ENCODE measurements at regions of chr4 and their contacts with region 1.

Region 1: GRCh38 chr4:106835919-106836318 is 200.2 kb downstream of the DKK2 start:
- DNase-seq: no peak
- H3K4me3 ChIP-seq: no peak overlapping the region
- H3K27ac ChIP-seq: no peak overlapping the region
- H3K4me1 ChIP-seq: no peaks in the 10 kb centered on the region
- H3K27me3 ChIP-seq: no peaks in the 10 kb centered on the region
- CTCF ChIP-seq: no peak
- POLR2A ChIP-seq: no peak

Region 2: GRCh38 chr4:106601519-106601918 is 234.4 kb before region 1 on chr4:
- intact Hi-C with region 1: no loop called
- DNase-seq: no peak
- H3K4me3 ChIP-seq: no peak overlapping the region
- H3K27ac ChIP-seq: no peak overlapping the region
- H3K4me1 ChIP-seq: no peaks in the 10 kb centered on the region
- H3K27me3 ChIP-seq: no peaks in the 10 kb centered on the region
- CTCF ChIP-seq: no peak
- POLR2A ChIP-seq: no peak

Region 3: GRCh38 chr4:108556588-108557200 is 1720.8 kb after region 1 on chr4:
- intact Hi-C with region 1: loop called (anchors 5 kb)
- DNase-seq: no peak
- H3K4me3 ChIP-seq: no peak overlapping the region
- H3K27ac ChIP-seq: no peak overlapping the region
- H3K4me1 ChIP-seq: no peaks in the 10 kb centered on the region
- H3K27me3 ChIP-seq: no peaks in the 10 kb centered on the region
- CTCF ChIP-seq: no peak
- POLR2A ChIP-seq: no peak